OCI-LY7 (cell line): ENCODE measurements at regions of chrX and their contacts with region 1.

Region 1: DNA sequence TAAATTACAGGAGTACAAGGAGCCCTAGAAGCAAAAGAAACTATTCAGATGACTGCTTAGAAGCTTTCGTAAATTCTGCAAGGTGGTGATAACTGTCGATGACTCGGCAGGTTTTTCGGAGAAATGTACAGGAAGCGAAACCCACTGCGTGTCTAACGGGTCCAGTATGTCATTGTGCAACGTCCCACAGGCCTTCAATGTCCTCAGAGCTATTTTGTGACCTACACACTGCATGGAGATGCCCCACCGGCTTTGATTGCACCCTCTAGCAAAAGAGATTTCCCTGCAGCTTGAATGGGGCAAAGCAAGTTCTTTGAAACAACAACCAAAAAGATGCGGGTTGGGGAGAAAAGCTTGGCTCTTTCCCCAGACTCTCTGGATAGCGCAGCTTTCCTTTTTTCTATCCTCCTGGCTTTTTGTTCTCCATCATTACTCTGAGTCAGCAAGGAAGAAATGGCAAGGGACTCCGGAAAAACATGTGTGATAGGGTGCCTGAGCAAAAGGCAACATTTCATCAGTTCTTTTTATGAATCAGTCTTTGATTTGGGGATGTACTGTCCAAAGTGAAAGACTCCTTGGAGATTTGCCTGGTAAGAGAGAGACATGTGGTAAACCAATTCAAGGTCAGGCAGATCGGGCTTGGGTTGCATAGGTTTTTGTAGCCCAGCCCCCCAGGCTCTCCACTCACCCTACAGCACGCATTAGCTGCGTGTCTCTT is 112.0 kb upstream of the TBL1X start:
- DNase-seq: peak; percentile 34
- H3K4me3 ChIP-seq: no peak overlapping the region
- H3K27ac ChIP-seq: no peak overlapping the region
- H3K4me1 ChIP-seq: peaks cover 15% of the 10 kb centered on the region
- CTCF ChIP-seq: no peak

Region 2: GRCh38 chrX:8913655-8914409 is 439.0 kb before region 1 on chrX:
- CTCF ChIA-PET with region 1: interaction called, 15 read pairs
- POLR2A ChIA-PET with region 1: no interaction called
- intact Hi-C with region 1: no loop called
- DNase-seq: no peak
- H3K4me3 ChIP-seq: no peak overlapping the region
- H3K27ac ChIP-seq: no peak overlapping the region
- H3K4me1 ChIP-seq: no peaks in the 10 kb centered on the region
- CTCF ChIP-seq: no peak